ENCODE measurements at regions of chr1 and their contacts with region 1.

Region 1: GRCh38 chr1:19115082-19115808 is 94.8 kb downstream of the UBR4 start:
- DNase-seq: no peak
- H3K4me3 ChIP-seq: no peak overlapping the region
- H3K27ac ChIP-seq: no peak overlapping the region
- H3K4me1 ChIP-seq: no peaks in the 10 kb centered on the region
- H3K27me3 ChIP-seq: no peaks in the 10 kb centered on the region
- CTCF ChIP-seq: no peak
- EP300 ChIP-seq: no peak
- POLR2A ChIP-seq: no peak

Region 2: DNA sequence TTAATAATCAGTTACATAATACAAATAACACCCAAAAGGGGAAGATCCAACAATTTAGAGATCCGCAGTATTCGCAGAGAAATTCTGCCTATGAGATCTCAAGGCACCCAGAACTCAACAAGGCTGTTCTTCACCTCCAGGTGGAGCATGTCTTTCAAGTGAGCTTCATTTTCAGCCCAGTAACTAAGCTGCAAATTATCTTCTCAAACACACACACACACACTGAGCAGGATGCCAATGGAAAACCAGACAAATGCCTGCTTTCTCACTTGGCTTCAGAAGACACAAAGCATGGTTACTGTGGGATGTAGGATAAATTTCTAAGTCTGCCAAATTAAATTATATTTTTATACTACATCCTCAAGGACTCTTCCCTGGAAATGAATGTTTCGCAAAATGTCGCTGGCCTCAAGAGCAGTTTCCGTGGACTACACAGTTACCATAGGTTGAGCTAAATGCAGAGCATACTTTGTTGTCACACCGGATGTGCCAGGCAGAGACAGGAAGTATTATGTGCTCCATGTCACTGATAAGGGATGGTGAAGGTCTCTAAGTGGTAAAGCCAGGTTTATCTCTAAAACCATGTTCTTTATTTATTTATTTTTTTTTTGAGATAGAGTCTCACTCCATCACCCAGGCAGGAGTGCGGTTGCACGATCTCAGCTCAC is 64.5 kb after region 1 on chr1:
- intact Hi-C with region 1: loop called (anchors 5 kb)
- DNase-seq: no peak
- H3K4me3 ChIP-seq: no peak overlapping the region
- H3K27ac ChIP-seq: no peak overlapping the region
- H3K4me1 ChIP-seq: no peaks in the 10 kb centered on the region
- H3K27me3 ChIP-seq: no peaks in the 10 kb centered on the region
- CTCF ChIP-seq: peak in 2 of 4 experiments; percentile 28 to 35
- EP300 ChIP-seq: no peak
- POLR2A ChIP-seq: no peak

Region 3: DNA sequence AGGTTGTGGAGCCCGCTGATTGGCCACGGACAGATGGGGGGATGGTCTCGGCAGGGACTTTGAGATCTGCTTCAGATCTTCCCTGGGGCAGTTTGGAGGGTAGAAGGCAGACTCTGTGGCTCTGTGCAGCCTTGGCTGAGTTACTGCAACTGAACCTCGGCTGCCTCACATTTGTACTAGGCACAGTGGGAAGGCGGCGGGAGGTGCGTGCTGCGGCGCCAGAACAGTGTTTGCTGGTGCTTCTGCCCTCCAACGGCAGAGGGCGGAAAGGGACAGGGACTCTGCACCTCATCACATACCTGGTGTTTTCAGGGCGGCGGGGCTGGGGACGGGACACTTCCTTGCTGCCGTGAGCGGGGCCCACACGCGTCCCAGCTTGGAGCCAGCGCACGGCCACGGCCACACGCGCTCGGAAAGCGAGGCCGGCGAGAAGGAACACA is 223.1 kb after region 1 on chr1:
- intact Hi-C with region 1: no loop called
- DNase-seq: no peak
- H3K4me3 ChIP-seq: no peak overlapping the region
- H3K27ac ChIP-seq: no peak overlapping the region
- H3K4me1 ChIP-seq: peaks cover 0 to 14% (median 6%) of the 10 kb centered on the region in 4 donors
- H3K27me3 ChIP-seq: no peaks in the 10 kb centered on the region
- CTCF ChIP-seq: peak in 1 of 4 experiments; percentile 23
- EP300 ChIP-seq: no peak
- POLR2A ChIP-seq: no peak